Activated B cell treated with CpG ODN at 0.5 μM for 24 hours (primary cell): ENCODE measurements at regions of chr18 and their contacts with region 1.

Region 1: GRCh38 chr18:44979748-44980147 is 299.1 kb downstream of the SETBP1 start:
- DNase-seq: no peak
- ATAC-seq: no peak
- H3K4me3 Mint-ChIP-seq: no peak overlapping the region
- H3K27ac Mint-ChIP-seq: peak overlapping the region; percentile 25
- H3K4me1 Mint-ChIP-seq: peaks cover 10% of the 10 kb centered on the region
- H3K27me3 Mint-ChIP-seq: no peaks in the 10 kb centered on the region
- CTCF ChIP-seq: no peak

Region 2: DNA sequence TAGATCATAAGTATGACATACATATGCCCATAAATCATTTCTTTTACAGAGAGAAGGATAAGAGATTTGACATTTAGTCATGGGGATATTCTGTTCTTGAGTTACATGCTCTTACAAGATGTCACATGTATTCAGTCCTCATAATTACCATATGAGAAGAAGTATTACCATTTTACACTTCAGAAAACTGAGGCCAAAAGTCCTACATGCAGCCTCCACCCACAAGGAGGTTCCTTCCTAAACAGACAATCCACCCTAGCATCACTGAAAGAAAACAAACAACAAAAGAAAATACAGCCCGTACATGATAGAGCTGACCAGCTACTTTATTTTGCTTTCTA is 36.0 kb after region 1 on chr18:
- CTCF ChIA-PET with region 1: no interaction called
- POLR2A ChIA-PET with region 1: no interaction called
- intact Hi-C with region 1: loop called (anchors 5 kb)
- DNase-seq: no peak
- ATAC-seq: no peak
- H3K4me3 Mint-ChIP-seq: no peak overlapping the region
- H3K27ac Mint-ChIP-seq: no peak overlapping the region
- H3K4me1 Mint-ChIP-seq: peaks cover 13% of the 10 kb centered on the region
- H3K27me3 Mint-ChIP-seq: no peaks in the 10 kb centered on the region
- CTCF ChIP-seq: no peak